B cell (primary cell): ENCODE measurements at regions of chr1 and their contacts with region 1.

Region 1: DNA sequence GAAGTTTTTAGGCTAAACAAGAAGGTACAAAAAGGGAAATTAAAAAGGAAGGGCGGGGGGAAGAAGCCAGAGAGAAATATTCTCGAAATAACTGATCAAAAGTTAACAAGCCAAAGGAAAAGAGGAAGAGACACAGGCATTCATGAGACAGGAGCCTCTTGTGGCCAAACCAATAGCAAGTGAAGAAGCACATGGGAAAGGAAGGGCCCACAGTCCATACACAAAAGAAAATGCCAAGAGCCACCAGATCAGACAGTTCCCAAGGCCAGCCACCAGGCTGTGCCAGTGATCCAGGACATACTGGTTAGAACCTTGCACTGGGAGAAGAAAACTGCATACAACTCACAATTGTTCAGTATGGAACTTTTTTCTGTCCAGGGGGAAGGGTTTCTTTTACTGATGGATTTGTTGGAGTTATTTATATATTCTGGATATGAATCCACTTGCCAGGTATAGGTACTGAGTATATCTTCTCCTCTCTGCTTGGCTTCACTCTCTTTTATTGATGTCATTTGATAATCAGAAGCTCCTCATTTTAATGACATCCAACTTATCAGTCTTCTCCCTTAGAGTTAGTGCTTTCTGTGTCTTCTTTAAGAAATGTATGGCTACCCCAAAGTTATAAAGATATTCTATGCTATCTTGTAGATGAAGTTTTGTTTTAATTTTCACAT is 76.8 kb downstream of the CD46 start:
- DNase-seq: peak; percentile 80
- ATAC-seq: no peak
- H3K4me3 ChIP-seq: no peak overlapping the region
- H3K4me3 Mint-ChIP-seq: peak overlapping the region; percentile 3
- H3K27ac ChIP-seq: peak overlapping the region in 1 of 2 donors; percentile 20
- H3K27ac Mint-ChIP-seq: peak overlapping the region; percentile 37
- H3K4me1 ChIP-seq: peaks cover 72 to 82% of the 10 kb centered on the region in 2 donors
- H3K4me1 Mint-ChIP-seq: peaks cover 92% of the 10 kb centered on the region
- H3K27me3 ChIP-seq: no peaks in the 10 kb centered on the region
- H3K27me3 Mint-ChIP-seq: peaks cover 4% of the 10 kb centered on the region
- CTCF ChIP-seq: peak; percentile 85

Region 2: GRCh38 chr1:207805841-207806421 is 22.7 kb before region 1 on chr1:
- CTCF ChIA-PET with region 1: interaction called, 24 read pairs
- POLR2A ChIA-PET with region 1: no interaction called
- intact Hi-C with region 1: loop called (anchors 2 kb)
- DNase-seq: peak; percentile 14
- ATAC-seq: no peak
- H3K4me3 ChIP-seq: no peak overlapping the region
- H3K4me3 Mint-ChIP-seq: no peak overlapping the region
- H3K27ac ChIP-seq: peak overlapping the region in 1 of 2 donors; percentile 82
- H3K27ac Mint-ChIP-seq: peak overlapping the region; percentile 26
- H3K4me1 ChIP-seq: peaks cover 25 to 32% of the 10 kb centered on the region in 2 donors
- H3K4me1 Mint-ChIP-seq: peaks cover 53% of the 10 kb centered on the region
- H3K27me3 ChIP-seq: no peaks in the 10 kb centered on the region
- H3K27me3 Mint-ChIP-seq: no peaks in the 10 kb centered on the region
- CTCF ChIP-seq: no peak

Region 3: DNA sequence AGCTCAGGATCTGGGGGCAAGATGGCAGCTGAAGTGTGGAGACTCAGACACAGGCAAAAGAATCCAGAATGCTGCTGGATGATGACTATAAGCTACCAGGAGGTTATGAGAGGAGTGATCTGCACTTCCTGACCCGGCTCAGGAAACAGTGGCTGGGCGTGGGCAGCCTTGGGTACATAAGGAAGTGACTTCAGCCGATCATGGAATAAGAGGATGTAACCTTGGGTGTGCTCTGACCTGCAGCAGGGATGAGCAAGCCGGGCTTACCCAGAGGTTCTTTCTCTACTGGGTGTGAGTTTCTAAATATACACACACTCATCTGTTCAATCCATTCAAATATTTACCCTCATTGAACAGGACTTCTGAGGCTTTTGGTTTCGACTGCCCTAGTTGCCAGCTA is 19.6 kb after region 1 on chr1:
- CTCF ChIA-PET with region 1: interaction called, 7 read pairs
- POLR2A ChIA-PET with region 1: interaction called, 5 read pairs
- intact Hi-C with region 1: loop called (anchors 2 kb)
- DNase-seq: no peak
- ATAC-seq: peak; percentile 28
- H3K4me3 ChIP-seq: no peak overlapping the region
- H3K4me3 Mint-ChIP-seq: no peak overlapping the region
- H3K27ac ChIP-seq: no peak overlapping the region
- H3K27ac Mint-ChIP-seq: no peak overlapping the region
- H3K4me1 ChIP-seq: peaks cover 31% of the 10 kb centered on the region in 2 donors
- H3K4me1 Mint-ChIP-seq: peaks cover 57% of the 10 kb centered on the region
- H3K27me3 ChIP-seq: no peaks in the 10 kb centered on the region
- H3K27me3 Mint-ChIP-seq: no peaks in the 10 kb centered on the region
- CTCF ChIP-seq: no peak

Region 4: DNA sequence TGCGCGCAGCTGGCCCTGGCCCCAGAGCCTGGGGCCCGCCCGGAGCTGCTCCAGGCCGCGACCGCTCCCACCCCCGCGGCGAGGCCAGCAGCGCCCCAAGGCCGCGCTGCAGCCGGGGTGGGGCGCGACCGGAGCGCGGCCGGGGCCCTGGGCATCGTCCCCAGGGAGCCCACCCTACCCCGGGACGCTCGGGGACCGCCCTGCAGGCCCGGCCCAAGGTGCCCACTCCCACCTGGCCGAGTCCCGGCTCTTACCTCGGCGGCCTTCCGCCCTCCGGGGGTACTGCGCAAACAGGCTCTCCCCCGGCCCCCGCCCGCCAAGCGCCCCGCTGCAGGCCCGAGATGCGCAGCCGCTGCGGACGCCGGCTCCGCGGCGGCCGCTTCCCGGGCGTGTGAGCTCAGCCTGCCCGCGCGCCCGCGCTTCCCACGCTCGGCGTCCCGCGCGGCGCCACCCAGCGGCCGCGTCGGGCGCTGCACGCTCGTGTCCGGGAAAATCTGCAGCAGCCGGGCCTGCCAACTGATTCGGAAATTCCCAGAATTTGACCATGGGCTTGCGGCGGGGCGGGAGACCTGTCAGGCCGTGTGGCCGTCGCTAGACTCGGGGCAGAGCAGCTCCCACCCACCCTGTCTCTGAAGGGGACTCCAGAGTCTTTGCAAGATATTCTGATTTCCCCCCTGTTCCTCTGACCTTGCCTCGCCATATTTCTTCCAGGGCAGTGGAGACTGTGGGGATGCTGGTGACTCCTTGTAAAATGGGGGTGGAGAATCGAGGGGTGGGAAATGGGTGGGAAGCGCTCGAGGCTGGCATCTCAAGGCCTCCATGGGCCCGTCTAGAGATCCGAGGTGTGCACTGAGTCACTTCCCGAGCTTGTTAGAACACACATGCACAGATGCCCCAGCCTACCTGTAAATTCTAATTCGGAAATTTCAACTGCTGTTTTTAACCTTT is 40.4 kb after region 1 on chr1:
- CTCF ChIA-PET with region 1: interaction called, 526 read pairs
- POLR2A ChIA-PET with region 1: interaction called, 71 read pairs
- intact Hi-C with region 1: loop called (anchors 1 kb)
- DNase-seq: peak; percentile 90
- ATAC-seq: peak; percentile 74
- H3K4me3 ChIP-seq: peak overlapping the region; percentile 63 to 79 (median 66)
- H3K4me3 Mint-ChIP-seq: peak overlapping the region; percentile 93
- H3K27ac ChIP-seq: peak overlapping the region; percentile 51 to 55
- H3K27ac Mint-ChIP-seq: peak overlapping the region; percentile 77
- H3K4me1 ChIP-seq: peaks cover 59 to 75% of the 10 kb centered on the region in 2 donors
- H3K4me1 Mint-ChIP-seq: peaks cover 87% of the 10 kb centered on the region
- H3K27me3 ChIP-seq: no peaks in the 10 kb centered on the region
- H3K27me3 Mint-ChIP-seq: no peaks in the 10 kb centered on the region
- CTCF ChIP-seq: peak; percentile 77

Region 5: GRCh38 chr1:207885129-207886032 is 56.8 kb after region 1 on chr1:
- CTCF ChIA-PET with region 1: interaction called, 87 read pairs
- POLR2A ChIA-PET with region 1: interaction called, 5 read pairs
- intact Hi-C with region 1: no loop called
- DNase-seq: peak; percentile 82
- ATAC-seq: peak; percentile 87
- H3K4me3 ChIP-seq: no peak overlapping the region
- H3K4me3 Mint-ChIP-seq: peak overlapping the region; percentile 36
- H3K27ac ChIP-seq: no peak overlapping the region
- H3K27ac Mint-ChIP-seq: no peak overlapping the region
- H3K4me1 ChIP-seq: peaks cover 15 to 26% of the 10 kb centered on the region in 2 donors
- H3K4me1 Mint-ChIP-seq: peaks cover 35% of the 10 kb centered on the region
- H3K27me3 ChIP-seq: no peaks in the 10 kb centered on the region
- H3K27me3 Mint-ChIP-seq: peaks cover 12% of the 10 kb centered on the region
- CTCF ChIP-seq: peak; percentile 95